Natural killer cell (primary cell): ENCODE measurements at regions of chr13 and their contacts with region 1.

Region 1: DNA sequence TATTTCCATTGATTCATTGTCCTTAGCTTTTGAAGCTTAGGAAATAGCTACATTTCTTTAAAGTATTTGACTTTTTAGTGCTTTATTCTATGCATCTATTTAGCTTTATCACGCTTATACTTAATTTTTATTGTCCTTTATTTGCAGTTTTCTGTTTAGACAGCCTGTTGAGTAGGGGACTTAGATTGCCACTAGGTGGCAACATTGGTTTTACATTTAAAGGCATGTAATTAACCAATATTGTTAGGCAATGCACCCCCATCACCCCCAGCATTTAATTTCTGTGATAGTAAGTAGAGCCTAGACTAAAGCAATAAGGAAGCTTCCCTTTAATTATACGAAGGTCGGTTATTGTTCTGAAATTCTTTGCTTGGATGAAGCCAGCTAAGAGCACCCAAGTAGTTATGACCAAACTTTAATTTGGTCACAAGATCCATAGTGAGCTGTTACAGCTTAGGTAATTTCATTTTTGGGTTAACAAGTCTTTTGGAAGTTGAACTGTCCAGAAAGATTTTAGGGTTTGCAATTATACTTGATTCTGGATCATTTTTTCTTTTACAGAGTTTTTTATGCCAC is 36.5 kb downstream of the B3GLCT start:
- DNase-seq: peak in 1 of 2 donors; percentile 37
- ATAC-seq: peak in 1 of 3 donors; percentile 56
- H3K4me3 ChIP-seq: no peak overlapping the region
- H3K4me3 Mint-ChIP-seq: no peak overlapping the region
- H3K27ac ChIP-seq: no peak overlapping the region
- H3K27ac Mint-ChIP-seq: no peak overlapping the region
- H3K4me1 ChIP-seq: no peaks in the 10 kb centered on the region
- H3K4me1 Mint-ChIP-seq: no peaks in the 10 kb centered on the region
- H3K27me3 ChIP-seq: no peaks in the 10 kb centered on the region
- H3K27me3 Mint-ChIP-seq: no peaks in the 10 kb centered on the region
- CTCF ChIP-seq: peak; percentile 65

Region 2: DNA sequence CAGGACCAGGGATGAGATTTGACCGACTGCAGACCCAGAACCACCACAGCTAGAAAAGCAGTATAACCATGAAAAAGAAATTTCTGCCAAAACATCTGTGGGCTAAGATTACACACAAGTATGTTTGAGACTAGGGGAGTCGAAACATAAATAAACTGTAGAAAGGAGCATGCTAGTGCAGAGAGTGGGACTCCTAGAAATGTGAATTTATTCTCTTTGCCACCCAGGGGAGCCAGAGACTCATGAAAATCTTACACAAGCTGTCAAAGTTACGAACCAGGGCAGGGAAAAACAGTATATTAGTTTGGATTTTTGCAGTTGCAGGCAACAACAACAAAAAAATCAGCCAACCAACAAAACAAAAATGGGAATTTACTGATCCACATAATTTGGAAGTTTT is 62.3 kb before region 1 on chr13:
- intact Hi-C with region 1: no loop called
- DNase-seq: no peak
- ATAC-seq: no peak
- H3K4me3 ChIP-seq: no peak overlapping the region
- H3K4me3 Mint-ChIP-seq: no peak overlapping the region
- H3K27ac ChIP-seq: no peak overlapping the region
- H3K27ac Mint-ChIP-seq: no peak overlapping the region
- H3K4me1 ChIP-seq: no peaks in the 10 kb centered on the region
- H3K4me1 Mint-ChIP-seq: peaks cover 4 to 7% of the 10 kb centered on the region in 2 donors
- H3K27me3 ChIP-seq: peaks cover 2% of the 10 kb centered on the region
- H3K27me3 Mint-ChIP-seq: peaks cover 5 to 11% of the 10 kb centered on the region in 2 donors
- CTCF ChIP-seq: no peak

Region 3: DNA sequence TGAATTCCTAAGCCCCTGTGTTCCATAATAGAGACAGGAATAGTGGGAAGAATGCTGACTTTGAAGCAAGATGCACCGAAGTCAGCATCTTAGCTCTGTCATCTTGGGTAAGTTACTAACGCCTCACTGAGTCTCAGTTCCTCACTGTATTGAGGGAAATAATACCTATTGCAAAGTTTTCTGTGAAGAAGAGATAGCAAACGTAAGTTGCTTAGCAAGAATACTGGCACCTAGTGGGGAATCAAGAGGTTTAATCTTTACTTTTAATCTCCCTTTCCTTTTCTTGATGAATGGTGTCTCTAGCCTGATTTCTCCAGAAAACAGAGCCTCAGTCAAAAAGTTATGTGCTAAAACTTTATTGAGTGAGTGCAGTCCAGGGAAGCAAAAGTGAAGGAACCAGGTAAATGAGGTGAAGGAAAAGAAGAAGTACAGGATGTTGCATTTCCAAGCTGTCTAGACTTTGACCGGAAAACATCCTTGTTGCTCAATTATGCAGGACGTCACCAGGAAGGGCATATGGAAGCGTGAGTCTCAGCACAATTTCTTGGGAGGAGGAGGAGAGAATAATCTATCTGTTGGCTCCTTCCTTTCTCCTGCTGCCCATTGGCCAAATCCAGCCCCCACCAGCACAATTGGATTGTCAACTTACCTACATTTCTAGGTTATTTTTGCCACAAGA is 173.5 kb after region 1 on chr13:
- intact Hi-C with region 1: no loop called
- DNase-seq: no peak
- ATAC-seq: no peak
- H3K4me3 ChIP-seq: no peak overlapping the region
- H3K4me3 Mint-ChIP-seq: no peak overlapping the region
- H3K27ac ChIP-seq: no peak overlapping the region
- H3K27ac Mint-ChIP-seq: no peak overlapping the region
- H3K4me1 ChIP-seq: no peaks in the 10 kb centered on the region
- H3K4me1 Mint-ChIP-seq: no peaks in the 10 kb centered on the region
- H3K27me3 ChIP-seq: no peaks in the 10 kb centered on the region
- H3K27me3 Mint-ChIP-seq: peaks cover 9 to 27% of the 10 kb centered on the region in 2 donors
- CTCF ChIP-seq: no peak

Region 4: DNA sequence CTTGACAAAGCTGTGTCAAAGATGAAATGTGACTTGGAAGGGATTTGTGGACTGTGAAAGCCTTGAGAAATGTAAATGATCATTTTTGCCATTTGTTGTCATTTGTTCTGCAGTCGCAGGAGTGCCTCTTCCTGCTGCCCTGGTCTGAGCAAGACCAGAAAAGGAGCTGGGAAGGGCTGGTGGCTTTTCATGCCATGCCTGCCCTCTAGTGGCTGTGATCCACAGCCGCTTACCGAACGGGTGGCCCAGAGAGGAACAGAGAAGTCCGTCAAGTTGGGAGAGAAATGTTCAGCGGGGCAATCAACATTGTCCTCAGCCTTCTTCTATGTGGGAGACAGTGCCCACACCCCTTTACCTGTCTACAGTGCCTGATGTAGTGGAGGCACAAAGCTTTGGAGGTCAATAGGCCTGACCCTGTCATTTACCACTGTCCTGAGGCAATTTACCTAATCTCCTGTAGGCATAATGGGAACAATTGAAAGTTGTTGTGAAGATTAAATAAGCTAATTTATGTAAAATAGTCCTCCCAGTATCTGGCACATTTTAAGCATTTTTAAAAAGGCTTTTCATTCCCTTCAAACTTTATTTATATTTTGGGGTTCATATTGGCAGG is 187.9 kb after region 1 on chr13:
- intact Hi-C with region 1: loop called (anchors 1 kb)
- DNase-seq: peak; percentile 34 to 63
- ATAC-seq: peak; percentile 76 to 94 (median 82)
- H3K4me3 ChIP-seq: no peak overlapping the region
- H3K4me3 Mint-ChIP-seq: no peak overlapping the region
- H3K27ac ChIP-seq: no peak overlapping the region
- H3K27ac Mint-ChIP-seq: no peak overlapping the region
- H3K4me1 ChIP-seq: no peaks in the 10 kb centered on the region
- H3K4me1 Mint-ChIP-seq: no peaks in the 10 kb centered on the region
- H3K27me3 ChIP-seq: no peaks in the 10 kb centered on the region
- H3K27me3 Mint-ChIP-seq: peaks cover 12 to 22% of the 10 kb centered on the region in 2 donors
- CTCF ChIP-seq: peak; percentile 70

Region 5: DNA sequence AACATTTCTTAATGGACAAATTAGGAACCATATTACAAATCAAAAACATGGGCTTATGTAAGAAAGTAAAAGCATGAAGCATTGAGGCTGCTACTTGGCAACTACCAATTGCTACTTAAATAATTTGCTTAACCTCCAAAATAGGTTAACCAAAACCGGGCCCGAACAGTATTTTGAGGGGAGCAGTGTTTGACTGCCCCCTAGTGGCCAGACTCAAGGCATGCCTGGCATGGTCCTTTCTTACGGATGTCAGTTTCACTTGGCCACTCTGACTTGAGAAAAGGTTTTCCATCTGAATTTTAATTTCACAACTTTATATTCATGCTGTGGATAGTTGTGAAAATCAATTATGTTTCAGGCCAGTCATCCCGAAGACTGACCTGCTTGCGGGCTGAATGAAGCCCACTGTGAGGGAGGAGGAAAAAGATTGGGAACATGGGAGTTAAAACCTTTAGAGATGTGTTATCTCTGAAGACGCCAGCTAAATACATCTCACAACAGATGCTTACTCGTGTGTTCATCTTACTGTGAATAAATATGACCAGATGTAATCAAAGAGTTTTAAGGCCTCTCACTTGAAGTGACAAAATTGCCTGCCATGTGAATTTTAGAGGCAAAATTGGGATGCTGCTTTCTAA is 505.9 kb after region 1 on chr13:
- intact Hi-C with region 1: loop called (anchors 5 kb)
- DNase-seq: peak; percentile 51 to 78
- ATAC-seq: peak; percentile 95 to 98 (median 95)
- H3K4me3 ChIP-seq: no peak overlapping the region
- H3K4me3 Mint-ChIP-seq: no peak overlapping the region
- H3K27ac ChIP-seq: no peak overlapping the region
- H3K27ac Mint-ChIP-seq: no peak overlapping the region
- H3K4me1 ChIP-seq: no peaks in the 10 kb centered on the region
- H3K4me1 Mint-ChIP-seq: peaks cover 4 to 5% of the 10 kb centered on the region in 2 donors
- H3K27me3 ChIP-seq: peaks cover 2% of the 10 kb centered on the region
- H3K27me3 Mint-ChIP-seq: peaks cover 14 to 18% of the 10 kb centered on the region in 2 donors
- CTCF ChIP-seq: peak; percentile 99